Transverse colon (tissue), 4 donors: ENCODE measurements at regions of chr1 and their contacts with region 1.

Region 1: DNA sequence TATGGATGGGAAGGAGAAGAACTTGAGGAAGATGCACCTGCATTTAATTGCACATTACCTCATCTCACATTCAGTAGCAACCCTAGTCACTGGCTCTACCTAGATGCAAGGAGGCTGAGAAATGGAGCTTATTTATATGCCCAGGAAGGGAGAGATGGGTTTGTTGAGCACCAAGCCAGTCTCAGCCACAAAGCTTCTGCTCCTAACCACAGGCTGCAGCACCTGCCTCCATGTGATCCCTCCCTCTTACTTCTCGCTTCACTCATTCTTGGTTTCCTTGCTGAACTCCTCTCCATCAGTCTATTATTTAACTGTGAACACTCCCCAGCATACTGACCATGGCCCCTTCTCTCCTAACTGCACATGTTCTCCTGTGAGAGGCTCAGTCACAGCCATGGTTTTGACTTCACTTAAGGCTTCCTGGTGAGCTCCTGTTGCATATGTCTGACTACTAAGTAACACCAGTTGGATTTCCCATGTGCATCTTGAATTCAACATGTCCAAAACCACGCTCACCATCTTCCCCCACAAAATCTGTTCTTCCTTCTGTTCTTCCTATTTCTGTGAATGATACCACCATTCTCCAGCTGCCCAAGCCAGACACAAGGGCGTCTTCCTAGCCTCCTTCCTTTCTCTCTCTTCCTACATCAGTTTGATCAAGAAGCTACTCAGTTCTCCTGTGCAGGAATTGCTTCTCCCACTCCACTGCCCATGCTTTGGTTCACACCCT is 139.8 kb downstream of the AK5 start:
- DNase-seq: no peak
- H3K4me3 ChIP-seq: no peak overlapping the region
- H3K27ac ChIP-seq: no peak overlapping the region
- H3K4me1 ChIP-seq: no peaks in the 10 kb centered on the region
- H3K27me3 ChIP-seq: no peaks in the 10 kb centered on the region
- CTCF ChIP-seq: no peak
- EP300 ChIP-seq: no peak
- POLR2A ChIP-seq: no peak

Region 2: DNA sequence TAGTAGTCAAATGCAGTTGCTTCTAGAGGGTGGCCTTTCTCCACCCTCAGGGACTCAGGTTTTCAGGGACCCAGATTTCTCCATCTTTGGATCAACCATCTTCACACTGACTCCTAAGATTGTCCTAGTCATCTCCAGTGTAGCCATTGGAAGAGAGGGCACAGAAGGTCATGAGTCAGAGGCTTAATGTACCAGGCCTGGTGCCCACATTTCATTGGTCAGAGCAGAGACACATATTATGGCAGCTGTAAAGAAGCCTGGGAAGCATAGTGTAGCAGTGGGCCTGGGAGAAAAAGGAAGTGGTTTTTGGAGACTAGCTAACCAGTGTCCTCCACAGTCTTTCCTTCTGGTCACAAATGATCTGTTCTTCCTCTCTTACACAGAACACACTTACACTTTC is 746.6 kb after region 1 on chr1:
- in situ Hi-C with region 1: no loop called
- intact Hi-C with region 1: loop called (anchors 5 kb)
- DNase-seq: no peak
- H3K4me3 ChIP-seq: no peak overlapping the region
- H3K27ac ChIP-seq: no peak overlapping the region
- H3K4me1 ChIP-seq: peaks cover 0 to 9% (median 0%) of the 10 kb centered on the region in 4 donors
- H3K27me3 ChIP-seq: no peaks in the 10 kb centered on the region
- CTCF ChIP-seq: no peak
- EP300 ChIP-seq: no peak
- POLR2A ChIP-seq: no peak